Heart left ventricle (tissue), 16 donors: ENCODE measurements at regions of chr11 and their contacts with region 1.

Region 1: GRCh38 chr11:63916837-63917691 is at the start of gene RCOR2:
- DNase-seq: peak; percentile 85 to 91 (median 87)
- ATAC-seq: peak in 3 of 4 donors; percentile 22 to 53 (median 38)
- H3K4me3 ChIP-seq: peak within 1 kb of the TSS; percentile 19 to 69 (median 56)
- H3K27ac ChIP-seq: peak within 1 kb of the TSS; percentile 84 to 99 (median 92)
- H3K4me1 ChIP-seq: peaks cover 7 to 62% (median 53%) of the 10 kb centered on the region in 12 donors
- H3K27me3 ChIP-seq: peaks cover 0 to 21% (median 0%) of the 10 kb centered on the region in 9 donors
- CTCF ChIP-seq: no peak
- POLR2A ChIP-seq: no peak
- total RNA-seq, gene RCOR2: 1.9 to 5.7 (median 4.2) TPM

Region 2: DNA sequence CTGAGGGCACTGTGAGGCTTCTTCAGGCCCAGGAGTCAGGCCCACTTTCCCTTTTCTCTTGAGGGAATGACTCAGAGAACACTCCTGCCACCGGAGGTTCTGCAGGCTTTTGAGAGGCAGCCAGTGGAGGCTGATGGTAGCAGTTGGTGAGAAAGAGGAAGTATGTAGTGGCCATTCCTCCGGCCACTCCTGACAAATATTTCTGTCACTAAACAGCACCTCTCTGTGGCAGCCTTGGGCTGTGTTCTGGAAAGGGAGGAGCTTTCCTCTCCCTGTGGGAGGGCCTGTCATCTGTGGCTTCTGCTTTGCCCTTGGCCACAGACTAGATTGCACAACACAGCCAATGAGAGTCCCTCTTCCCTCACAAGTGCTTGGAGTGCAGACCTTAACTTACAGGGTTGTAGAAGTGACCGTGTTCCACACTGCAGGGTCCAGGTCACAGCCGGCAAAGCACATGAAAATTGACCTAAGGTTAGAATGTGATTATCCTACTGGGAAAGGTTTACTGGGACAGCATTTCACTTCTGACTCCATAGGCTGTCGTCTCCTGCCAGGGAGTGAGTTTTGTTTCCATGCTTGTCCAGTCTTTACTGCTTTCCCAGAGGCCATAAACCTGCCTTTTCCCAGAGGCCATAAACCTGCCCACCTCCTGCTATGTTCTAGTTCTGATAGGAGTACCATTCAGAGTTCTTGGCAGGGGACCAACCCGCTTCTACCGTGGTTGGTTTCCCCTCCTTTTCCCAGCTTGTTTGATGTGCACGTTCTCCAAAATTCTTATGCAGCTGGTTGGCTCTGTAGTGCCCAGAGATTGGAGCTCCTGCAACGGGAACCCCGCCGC is 44.9 kb before region 1 on chr11:
- intact Hi-C with region 1: loop called in 3 of 10 experiments (anchors 1 to 5 kb)
- DNase-seq: peak; percentile 76 to 93 (median 86)
- ATAC-seq: peak; percentile 93 to 96 (median 96)
- H3K4me3 ChIP-seq: peak overlapping the region in 5 of 12 donors; percentile 13 to 30 (median 23)
- H3K27ac ChIP-seq: peak overlapping the region; percentile 37 to 88 (median 77)
- H3K4me1 ChIP-seq: peaks cover 15 to 99% (median 69%) of the 10 kb centered on the region in 12 donors
- H3K27me3 ChIP-seq: no peaks in the 10 kb centered on the region
- CTCF ChIP-seq: peak; percentile 13 to 84 (median 50)
- POLR2A ChIP-seq: peak in 1 of 2 donors; percentile 30

Region 3: DNA sequence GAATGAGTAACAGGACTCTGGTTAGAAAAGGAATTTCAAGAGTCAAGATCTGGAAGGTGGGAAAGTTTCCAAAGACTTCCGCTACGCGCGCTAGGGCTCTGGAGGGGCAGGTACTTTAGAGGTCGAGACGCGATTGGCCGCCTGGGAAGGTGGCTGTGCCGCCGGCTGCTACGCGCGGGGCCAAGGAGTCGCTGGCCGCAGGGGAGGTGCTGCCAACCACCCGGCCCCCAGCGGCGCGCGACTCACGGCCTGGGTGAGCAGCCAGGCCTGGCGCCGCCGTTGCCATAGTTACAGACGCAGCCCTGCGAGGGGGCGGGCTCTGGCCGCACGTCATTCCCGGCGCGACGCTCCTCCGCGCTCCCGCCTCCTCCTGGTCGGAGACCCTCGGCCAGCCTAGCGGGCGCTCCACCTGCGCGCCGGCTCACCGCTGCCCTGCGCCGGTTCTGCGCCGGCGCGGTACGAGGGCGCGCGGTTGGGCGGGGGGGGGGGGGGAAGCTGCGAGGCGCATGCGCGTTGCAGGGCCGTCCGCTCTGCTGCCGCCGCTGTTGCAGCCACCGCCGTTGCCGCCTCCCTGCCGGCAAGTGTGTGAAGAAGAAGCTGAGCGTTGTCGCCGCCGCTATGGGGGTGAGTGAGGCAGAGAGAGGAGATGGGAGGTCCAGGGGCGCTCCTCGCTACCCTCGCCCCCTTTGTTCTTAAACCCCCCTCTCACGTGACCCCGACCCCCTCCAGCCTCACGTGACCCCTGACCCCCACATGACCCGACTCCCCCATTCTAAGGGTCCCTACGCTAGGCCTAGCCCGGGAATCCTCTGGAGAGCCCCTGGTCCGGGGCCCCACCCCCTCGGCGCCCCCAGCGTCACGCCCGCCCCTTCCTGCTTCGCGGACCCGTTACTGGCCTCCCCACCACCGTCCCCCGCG is 21.7 kb after region 1 on chr11 and contains the start of gene NAA40:
- intact Hi-C with region 1: loop called in 3 of 10 experiments (anchors 1 to 2 kb)
- DNase-seq: peak; percentile 89 to 95 (median 94)
- ATAC-seq: peak; percentile 87 to 96 (median 94)
- H3K4me3 ChIP-seq: peak within 1 kb of the TSS; percentile 50 to 94 (median 74)
- H3K27ac ChIP-seq: peak within 1 kb of the TSS in 11 of 12 donors; percentile 35 to 86 (median 75)
- H3K4me1 ChIP-seq: peaks cover 0 to 33% (median 19%) of the 10 kb centered on the region in 12 donors
- H3K27me3 ChIP-seq: no peaks in the 10 kb centered on the region
- CTCF ChIP-seq: peak in 2 of 12 donors; percentile 7 to 35
- POLR2A ChIP-seq: no peak
- total RNA-seq, gene NAA40: 9.7 to 26.1 (median 18.8) TPM

Region 4: DNA sequence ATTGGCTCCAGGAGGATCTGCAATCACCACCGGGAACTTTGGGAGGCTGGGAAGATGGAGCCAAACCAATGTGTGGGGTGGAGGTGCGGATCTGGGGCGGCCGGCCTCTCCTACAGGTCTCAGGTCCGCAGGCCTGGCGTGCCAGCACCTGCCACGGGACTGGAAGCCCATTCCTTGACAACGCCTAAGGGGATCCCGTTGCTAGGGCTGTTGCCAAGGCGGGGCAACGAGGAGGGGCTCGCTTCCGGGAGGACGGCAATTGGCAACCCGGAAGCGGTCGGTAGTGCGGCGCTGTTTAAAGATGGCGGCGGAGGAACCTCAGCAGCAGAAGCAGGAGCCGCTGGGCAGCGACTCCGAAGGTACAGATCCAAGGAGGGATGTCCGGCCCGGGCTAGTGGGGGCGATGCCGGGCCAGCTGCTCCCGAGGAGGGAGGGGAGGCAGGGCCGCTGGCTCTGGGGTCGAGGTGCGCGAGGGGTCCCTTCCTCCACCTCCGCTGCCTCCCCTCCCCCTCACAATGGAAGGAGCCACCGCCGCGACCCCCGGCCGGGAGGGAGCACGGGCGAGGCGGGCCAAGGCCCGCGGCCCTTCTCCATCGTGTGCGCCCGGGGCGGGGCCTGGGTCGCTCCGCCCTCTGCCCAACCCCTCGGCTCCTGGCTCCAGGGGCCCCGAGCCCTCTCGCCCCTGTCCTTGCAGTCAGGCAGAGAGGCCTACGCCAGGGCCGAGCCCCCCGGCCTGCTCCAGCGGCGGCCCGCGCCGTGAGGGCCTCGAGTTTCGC is 69.3 kb after region 1 on chr11 and contains the start of gene OTUB1:
- intact Hi-C with region 1: no loop called
- DNase-seq: peak; percentile 90 to 94 (median 94)
- ATAC-seq: peak; percentile 82 to 95 (median 94)
- H3K4me3 ChIP-seq: peak within 1 kb of the TSS; percentile 73 to 100 (median 96)
- H3K27ac ChIP-seq: peak within 1 kb of the TSS; percentile 81 to 93 (median 86)
- H3K4me1 ChIP-seq: peaks cover 0 to 34% (median 19%) of the 10 kb centered on the region in 12 donors
- H3K27me3 ChIP-seq: no peaks in the 10 kb centered on the region
- CTCF ChIP-seq: no peak
- POLR2A ChIP-seq: peak in 1 of 2 donors; percentile 61
- total RNA-seq, gene OTUB1: 47.4 to 73.1 (median 54.5) TPM